ENCODE measurements at regions of chr6 and their contacts with region 1.

Region 1: DNA sequence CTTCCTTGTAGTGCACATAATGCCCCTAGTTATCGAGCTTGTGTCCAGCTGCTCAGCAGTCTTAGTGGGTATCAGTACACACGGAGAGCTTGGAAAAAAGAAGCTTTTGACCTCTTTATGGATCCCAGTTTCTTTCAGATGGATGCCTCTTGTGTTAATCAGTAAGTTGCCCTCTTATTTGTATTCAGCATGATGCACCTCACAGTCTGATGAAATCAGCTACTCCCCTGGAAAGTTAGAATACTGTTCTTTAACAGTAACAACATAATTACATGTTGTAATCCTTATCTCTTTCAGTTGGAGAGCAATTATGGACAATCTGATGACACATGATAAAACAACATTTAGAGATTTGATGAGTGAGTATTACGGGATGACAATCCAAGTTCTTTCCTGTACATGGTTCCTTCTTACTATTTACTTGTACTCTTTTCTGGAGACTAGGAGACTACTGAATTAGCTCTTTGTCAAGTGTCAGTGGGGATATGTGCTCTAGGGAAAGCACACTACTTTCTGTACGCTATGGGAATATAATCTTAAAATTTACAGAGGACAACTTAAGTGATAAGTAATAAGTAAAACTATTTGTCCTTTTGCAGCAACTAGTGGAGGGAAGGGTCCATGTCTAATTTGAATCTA is 39.1 kb downstream of the PGM3 start:
- DNase-seq: no peak
- H3K4me3 ChIP-seq: no peak overlapping the region
- H3K27ac ChIP-seq: no peak overlapping the region
- H3K4me1 ChIP-seq: no peaks in the 10 kb centered on the region
- H3K27me3 ChIP-seq: no peaks in the 10 kb centered on the region
- CTCF ChIP-seq: no peak

Region 2: DNA sequence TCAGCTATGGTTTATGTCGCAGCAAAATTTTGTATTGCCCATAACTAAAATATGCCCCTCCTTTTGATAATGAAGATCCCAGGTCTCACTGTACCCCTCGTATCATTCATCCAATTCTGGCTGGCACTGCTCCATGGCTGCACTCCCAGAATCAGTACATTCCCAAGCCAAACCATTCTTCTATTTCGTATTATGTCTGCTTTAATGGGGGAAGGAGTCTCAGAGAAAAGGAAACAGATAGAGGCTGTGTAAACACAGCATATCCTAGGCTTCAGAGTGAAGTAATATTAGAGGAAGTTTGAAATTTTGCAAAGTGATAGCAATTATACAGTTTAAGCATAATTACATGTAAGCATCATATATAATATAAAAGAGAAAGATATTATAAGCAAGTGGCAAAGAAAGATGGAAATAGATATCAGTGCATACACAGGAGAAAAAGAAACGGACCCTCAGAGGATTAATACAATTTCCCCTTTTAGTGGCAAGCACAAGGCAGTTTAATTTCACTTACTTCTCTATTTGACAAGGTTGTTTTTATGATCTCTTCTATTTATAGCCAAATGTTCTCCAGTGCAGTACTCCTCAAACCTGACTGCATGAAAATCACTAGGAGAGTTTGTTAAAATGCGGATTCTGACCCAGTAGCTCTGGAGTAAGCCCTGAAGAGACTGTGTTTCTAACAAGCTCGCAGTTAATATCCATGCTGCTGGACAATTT is 1345.0 kb before region 1 on chr6:
- CTCF ChIA-PET with region 1: no interaction called
- dilution Hi-C with region 1: no loop called
- in situ Hi-C with region 1: no loop called
- intact Hi-C with region 1: no loop called
- DNase-seq: no peak
- H3K4me3 ChIP-seq: no peak overlapping the region
- H3K27ac ChIP-seq: no peak overlapping the region
- H3K4me1 ChIP-seq: no peaks in the 10 kb centered on the region
- H3K27me3 ChIP-seq: no peaks in the 10 kb centered on the region
- CTCF ChIP-seq: no peak

Region 3: DNA sequence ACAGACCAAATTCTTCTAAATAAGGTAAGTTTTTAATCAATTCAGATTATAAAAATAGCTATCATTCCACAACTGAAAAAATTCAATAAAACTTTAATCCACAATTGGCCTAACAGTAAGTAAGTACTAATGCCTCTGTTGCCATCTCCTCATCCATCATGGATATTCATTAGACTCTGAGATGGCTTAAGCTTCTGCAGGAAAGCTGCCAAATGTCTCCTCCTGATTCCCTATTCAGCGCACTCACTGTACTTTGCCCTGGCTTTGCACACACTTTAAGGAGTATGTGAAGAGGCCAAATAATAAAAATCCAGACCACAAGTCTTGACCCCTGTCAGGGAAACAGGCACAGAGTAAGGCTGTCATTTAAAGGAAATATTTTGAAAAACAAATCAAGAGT is 15.5 kb after region 1 on chr6:
- CTCF ChIA-PET with region 1: no interaction called
- dilution Hi-C with region 1: no loop called
- in situ Hi-C with region 1: no loop called
- intact Hi-C with region 1: loop called (anchors 2 kb)
- DNase-seq: no peak
- H3K4me3 ChIP-seq: no peak overlapping the region
- H3K27ac ChIP-seq: no peak overlapping the region
- H3K4me1 ChIP-seq: no peaks in the 10 kb centered on the region
- H3K27me3 ChIP-seq: no peaks in the 10 kb centered on the region
- CTCF ChIP-seq: no peak

Region 4: GRCh38 chr6:83183082-83183828 is 29.3 kb after region 1 on chr6:
- CTCF ChIA-PET with region 1: no interaction called
- dilution Hi-C with region 1: no loop called
- in situ Hi-C with region 1: no loop called
- intact Hi-C with region 1: loop called (anchors 5 kb)
- DNase-seq: peak; percentile 98
- H3K4me3 ChIP-seq: no peak overlapping the region
- H3K27ac ChIP-seq: peak overlapping the region; percentile 63
- H3K4me1 ChIP-seq: peaks cover 26% of the 10 kb centered on the region
- H3K27me3 ChIP-seq: no peaks in the 10 kb centered on the region
- CTCF ChIP-seq: no peak

Measured in mammary epithelial cell (primary cell).